CD8-positive, alpha-beta memory T cell (primary cell): ENCODE measurements at regions of chr11 and their contacts with region 1.

Region 1: GRCh38 chr11:77127232-77127911 is 674 bp upstream of the MYO7A start:
- DNase-seq: peak; percentile 45 to 63 (median 49)
- H3K4me3 ChIP-seq: peak overlapping the region; percentile 61
- H3K4me3 Mint-ChIP-seq: peak overlapping the region in 6 of 7 donors; percentile 41 to 86 (median 66)
- H3K27ac ChIP-seq: no peak overlapping the region
- H3K27ac Mint-ChIP-seq: peak overlapping the region in 1 of 8 donors; percentile 50
- H3K4me1 ChIP-seq: peaks cover 8% of the 10 kb centered on the region
- H3K4me1 Mint-ChIP-seq: peaks cover 3 to 8% (median 5%) of the 10 kb centered on the region in 3 donors
- H3K27me3 ChIP-seq: no peaks in the 10 kb centered on the region
- H3K27me3 Mint-ChIP-seq: no peaks in the 10 kb centered on the region

Region 2: GRCh38 chr11:77035039-77035994 is 92.1 kb before region 1 on chr11:
- CTCF ChIA-PET with region 1: no interaction called
- POLR2A ChIA-PET with region 1: no interaction called
- DNase-seq: no peak
- H3K4me3 ChIP-seq: no peak overlapping the region
- H3K4me3 Mint-ChIP-seq: peak overlapping the region in 1 of 7 donors; percentile 3
- H3K27ac ChIP-seq: no peak overlapping the region
- H3K27ac Mint-ChIP-seq: peak overlapping the region in 1 of 8 donors; percentile 19
- H3K4me1 ChIP-seq: no peaks in the 10 kb centered on the region
- H3K4me1 Mint-ChIP-seq: peaks cover 6 to 10% (median 8%) of the 10 kb centered on the region in 3 donors
- H3K27me3 ChIP-seq: no peaks in the 10 kb centered on the region
- H3K27me3 Mint-ChIP-seq: peaks cover 31 to 48% of the 10 kb centered on the region in 2 donors

Region 3: GRCh38 chr11:77147668-77148321 is 20.4 kb after region 1 on chr11:
- CTCF ChIA-PET with region 1: interaction called, 14 read pairs
- POLR2A ChIA-PET with region 1: no interaction called
- DNase-seq: peak; percentile 34 to 68 (median 44)
- H3K4me3 ChIP-seq: peak overlapping the region; percentile 47
- H3K4me3 Mint-ChIP-seq: peak overlapping the region; percentile 60 to 86 (median 76)
- H3K27ac ChIP-seq: no peak overlapping the region
- H3K27ac Mint-ChIP-seq: peak overlapping the region in 7 of 8 donors; percentile 59 to 95 (median 83)
- H3K4me1 ChIP-seq: peaks cover 15% of the 10 kb centered on the region
- H3K4me1 Mint-ChIP-seq: peaks cover 37 to 52% (median 41%) of the 10 kb centered on the region in 3 donors
- H3K27me3 ChIP-seq: no peaks in the 10 kb centered on the region
- H3K27me3 Mint-ChIP-seq: no peaks in the 10 kb centered on the region

Region 4: GRCh38 chr11:77187776-77188632 is 60.6 kb after region 1 on chr11:
- CTCF ChIA-PET with region 1: interaction called, 108 read pairs
- POLR2A ChIA-PET with region 1: no interaction called
- DNase-seq: peak; percentile 48 to 74 (median 54)
- H3K4me3 ChIP-seq: no peak overlapping the region
- H3K4me3 Mint-ChIP-seq: no peak overlapping the region
- H3K27ac ChIP-seq: no peak overlapping the region
- H3K27ac Mint-ChIP-seq: no peak overlapping the region
- H3K4me1 ChIP-seq: no peaks in the 10 kb centered on the region
- H3K4me1 Mint-ChIP-seq: peaks cover 0 to 8% (median 4%) of the 10 kb centered on the region in 3 donors
- H3K27me3 ChIP-seq: no peaks in the 10 kb centered on the region
- H3K27me3 Mint-ChIP-seq: peaks cover 0 to 2% of the 10 kb centered on the region in 2 donors

Region 5: GRCh38 chr11:77547863-77548551 is 420.6 kb after region 1 on chr11:
- CTCF ChIA-PET with region 1: interaction called, 10 read pairs
- POLR2A ChIA-PET with region 1: no interaction called
- DNase-seq: peak in 2 of 5 donors; percentile 17 to 48
- H3K4me3 ChIP-seq: no peak overlapping the region
- H3K4me3 Mint-ChIP-seq: peak overlapping the region in 2 of 7 donors; percentile 0 to 15
- H3K27ac ChIP-seq: no peak overlapping the region
- H3K27ac Mint-ChIP-seq: no peak overlapping the region
- H3K4me1 ChIP-seq: no peaks in the 10 kb centered on the region
- H3K4me1 Mint-ChIP-seq: peaks cover 5 to 8% (median 7%) of the 10 kb centered on the region in 3 donors
- H3K27me3 ChIP-seq: no peaks in the 10 kb centered on the region
- H3K27me3 Mint-ChIP-seq: peaks cover 0 to 1% of the 10 kb centered on the region in 2 donors

Region 6: DNA sequence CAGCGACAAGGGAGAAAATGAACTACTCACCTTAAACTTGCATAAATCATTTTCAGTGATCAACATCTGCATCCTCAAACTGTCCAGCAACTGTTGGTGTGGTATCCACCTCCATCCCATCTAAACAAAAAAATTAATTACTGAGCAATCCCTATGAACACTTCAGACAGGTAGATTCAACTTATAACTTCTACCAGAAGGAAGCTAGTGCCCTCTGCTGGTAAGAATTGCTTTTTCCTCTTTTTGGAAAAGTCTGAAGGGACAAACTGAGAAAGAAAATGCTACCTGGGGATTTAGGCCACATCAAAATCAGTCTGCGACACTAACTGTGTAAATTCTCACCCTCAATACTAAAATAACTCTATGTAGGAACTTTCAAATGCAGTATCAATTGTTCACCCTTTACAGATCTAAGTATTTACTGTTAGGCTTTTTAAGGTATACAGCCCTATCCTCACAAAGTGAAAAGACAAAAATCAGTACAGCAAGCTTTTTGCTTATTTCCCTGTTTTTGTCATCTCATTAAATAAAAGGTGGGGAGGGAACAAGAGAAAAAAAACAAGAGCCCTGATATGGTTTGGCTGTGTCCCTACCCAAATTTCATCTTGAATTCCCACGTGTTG is 492.3 kb after region 1 on chr11:
- CTCF ChIA-PET with region 1: interaction called, 14 read pairs
- POLR2A ChIA-PET with region 1: no interaction called
- DNase-seq: peak in 2 of 5 donors; percentile 5 to 35
- H3K4me3 ChIP-seq: no peak overlapping the region
- H3K4me3 Mint-ChIP-seq: no peak overlapping the region
- H3K27ac ChIP-seq: no peak overlapping the region
- H3K27ac Mint-ChIP-seq: no peak overlapping the region
- H3K4me1 ChIP-seq: no peaks in the 10 kb centered on the region
- H3K4me1 Mint-ChIP-seq: peaks cover 0 to 2% (median 0%) of the 10 kb centered on the region in 3 donors
- H3K27me3 ChIP-seq: no peaks in the 10 kb centered on the region
- H3K27me3 Mint-ChIP-seq: no peaks in the 10 kb centered on the region